ENCODE measurements at regions of chr15 and their contacts with region 1.

Region 1: GRCh38 chr15:38193496-38193895 is 59.1 kb upstream of the SPRED1 start:
- DNase-seq: no peak
- H3K4me3 ChIP-seq: no peak overlapping the region
- H3K27ac ChIP-seq: peak overlapping the region; percentile 75
- H3K4me1 ChIP-seq: peaks cover 59% of the 10 kb centered on the region
- CTCF ChIP-seq: no peak

Region 2: GRCh38 chr15:38002883-38003477 is 190.5 kb before region 1 on chr15:
- CTCF ChIA-PET with region 1: no interaction called
- POLR2A ChIA-PET with region 1: no interaction called
- intact Hi-C with region 1: loop called (anchors 10 kb)
- DNase-seq: peak; percentile 77
- H3K4me3 ChIP-seq: no peak overlapping the region
- H3K27ac ChIP-seq: no peak overlapping the region
- H3K4me1 ChIP-seq: no peaks in the 10 kb centered on the region
- CTCF ChIP-seq: peak; percentile 87

Region 3: DNA sequence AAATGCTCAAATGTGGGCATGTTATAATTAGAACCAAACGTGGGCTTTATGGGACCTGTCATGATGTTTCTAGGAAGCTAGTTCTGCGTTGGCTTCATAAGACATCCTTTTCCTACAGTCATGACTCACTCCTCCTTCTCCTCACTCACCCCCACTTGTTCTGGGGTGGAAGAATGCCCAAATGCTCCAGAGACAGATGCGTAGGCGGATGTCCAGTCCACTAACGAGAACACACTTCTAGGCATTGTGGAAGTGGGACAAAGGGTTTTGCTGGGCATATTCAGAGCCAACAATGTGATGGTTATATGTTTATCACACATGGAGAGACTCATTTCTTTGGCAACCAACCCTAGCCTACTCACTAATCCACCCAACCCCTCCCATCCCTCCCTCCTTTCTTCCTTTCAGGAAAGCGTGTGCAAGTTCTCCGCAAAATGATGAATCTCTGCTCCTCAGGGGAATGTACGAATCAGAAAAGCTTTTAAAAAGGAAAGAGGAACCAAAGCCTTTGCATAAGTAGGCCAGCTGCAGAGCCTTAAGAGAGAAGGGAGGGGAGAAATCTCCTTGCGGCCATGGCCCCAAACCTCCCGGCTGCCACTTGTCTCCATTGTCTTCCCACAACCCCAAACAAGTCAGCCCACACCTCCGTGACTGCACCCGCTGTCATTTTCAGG is 63.8 kb before region 1 on chr15:
- CTCF ChIA-PET with region 1: no interaction called
- POLR2A ChIA-PET with region 1: interaction called, 4 read pairs
- intact Hi-C with region 1: loop called (anchors 1 kb)
- DNase-seq: peak; percentile 66
- H3K4me3 ChIP-seq: peak overlapping the region; percentile 26
- H3K27ac ChIP-seq: peak overlapping the region; percentile 1
- H3K4me1 ChIP-seq: peaks cover 46% of the 10 kb centered on the region
- CTCF ChIP-seq: no peak

Region 4: DNA sequence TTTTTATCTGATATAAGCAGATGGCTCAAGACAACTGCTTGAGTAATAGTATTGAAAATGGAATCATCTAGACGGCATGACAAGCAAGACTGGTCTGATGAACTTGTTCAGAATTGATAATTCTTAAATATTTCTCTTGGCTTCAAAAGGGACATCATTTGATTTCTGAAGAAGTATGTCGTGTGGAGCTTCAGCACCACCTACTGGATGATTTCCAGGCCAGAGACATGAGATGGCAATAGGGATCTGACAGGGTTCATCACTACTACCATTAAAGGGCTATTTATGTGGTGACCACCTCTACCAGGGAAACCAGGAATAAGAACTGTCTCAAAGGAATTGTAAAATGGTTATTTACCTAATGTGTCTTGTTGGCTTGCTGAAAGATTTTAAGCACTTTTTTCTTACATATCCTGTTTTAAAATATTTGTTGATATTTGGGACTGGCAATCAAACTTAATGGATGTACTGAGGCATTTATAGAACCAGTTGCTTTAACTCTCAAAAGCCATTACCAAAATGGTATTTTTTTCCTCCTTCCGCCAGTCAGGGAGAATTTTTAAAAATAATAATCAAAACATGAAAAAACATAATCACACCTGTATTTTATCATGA is 160.9 kb after region 1 on chr15:
- CTCF ChIA-PET with region 1: no interaction called
- POLR2A ChIA-PET with region 1: no interaction called
- intact Hi-C with region 1: loop called (anchors 2 kb)
- DNase-seq: peak; percentile 74
- H3K4me3 ChIP-seq: no peak overlapping the region
- H3K27ac ChIP-seq: no peak overlapping the region
- H3K4me1 ChIP-seq: no peaks in the 10 kb centered on the region
- CTCF ChIP-seq: peak; percentile 95